K562 (cell line): ENCODE measurements at regions of chr2 and their contacts with region 1.

Region 1: GRCh38 chr2:46296840-46297545 is at the start of gene EPAS1:
- DNase-seq: peak; percentile 93 to 99 (median 98)
- ATAC-seq: peak; percentile 89
- H3K4me3 ChIP-seq: peak within 1 kb of the TSS; percentile 56
- H3K27ac ChIP-seq: peak within 1 kb of the TSS; percentile 66; the same call in 2 of the 3 replicates
- H3K4me1 ChIP-seq: peaks cover 16 to 39% of the 10 kb centered on the region in 2 experiments
- H3K27me3 ChIP-seq: peaks cover 5 to 13% of the 10 kb centered on the region in 2 experiments; a peak in 3 of 5 replicates
- CTCF ChIP-seq: no peak
- EP300 ChIP-seq: no peak
- POLR2A ChIP-seq: peak; percentile 49; the same call in 1 of the 2 replicates
- RAD21 ChIP-seq: no peak
- polyA plus RNA-seq, gene EPAS1: 0.25 to 0.56 TPM

Region 2: DNA sequence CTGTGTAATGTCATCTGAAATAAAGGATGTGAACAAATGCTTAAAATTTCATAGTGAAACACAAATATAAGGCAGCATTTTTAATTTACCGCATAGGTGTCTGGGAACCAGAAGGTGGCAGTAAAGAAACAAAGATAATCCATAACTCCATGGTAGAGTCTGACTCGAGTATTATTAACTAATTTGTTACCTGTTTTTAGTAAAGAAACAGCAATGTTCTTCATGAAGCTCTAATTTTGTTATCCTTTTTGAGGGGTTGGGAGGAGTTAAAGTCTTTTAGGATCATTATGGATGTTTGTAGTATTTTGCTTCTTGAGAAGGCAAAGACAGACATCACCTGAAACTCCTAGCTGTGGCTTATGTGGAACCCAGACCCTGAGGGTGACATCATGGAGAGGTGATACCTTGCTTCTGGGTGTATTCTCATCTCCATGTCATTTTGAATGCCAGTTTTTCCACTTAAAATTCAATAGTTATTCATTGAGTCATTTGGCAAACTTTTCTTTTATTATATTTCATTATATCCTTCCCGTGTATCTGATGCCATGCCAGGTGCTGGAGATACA is 286.0 kb before region 1 on chr2:
- CTCF ChIA-PET with region 1: no interaction called
- POLR2A ChIA-PET with region 1: no interaction called
- in situ Hi-C with region 1: no loop called
- intact Hi-C with region 1: loop called (anchors 10 kb)
- DNase-seq: peak in 2 of 4 experiments; percentile 34 to 49
- ATAC-seq: peak; percentile 77
- H3K4me3 ChIP-seq: no peak overlapping the region
- H3K27ac ChIP-seq: no peak overlapping the region
- H3K4me1 ChIP-seq: no peaks in the 10 kb centered on the region
- H3K27me3 ChIP-seq: peaks cover 14 to 18% of the 10 kb centered on the region in 2 experiments
- CTCF ChIP-seq: peak in 2 of 3 experiments; percentile 23 to 81; a peak in 4 of 6 replicates
- EP300 ChIP-seq: no peak
- POLR2A ChIP-seq: no peak
- RAD21 ChIP-seq: peak; percentile 81 to 88

Region 3: DNA sequence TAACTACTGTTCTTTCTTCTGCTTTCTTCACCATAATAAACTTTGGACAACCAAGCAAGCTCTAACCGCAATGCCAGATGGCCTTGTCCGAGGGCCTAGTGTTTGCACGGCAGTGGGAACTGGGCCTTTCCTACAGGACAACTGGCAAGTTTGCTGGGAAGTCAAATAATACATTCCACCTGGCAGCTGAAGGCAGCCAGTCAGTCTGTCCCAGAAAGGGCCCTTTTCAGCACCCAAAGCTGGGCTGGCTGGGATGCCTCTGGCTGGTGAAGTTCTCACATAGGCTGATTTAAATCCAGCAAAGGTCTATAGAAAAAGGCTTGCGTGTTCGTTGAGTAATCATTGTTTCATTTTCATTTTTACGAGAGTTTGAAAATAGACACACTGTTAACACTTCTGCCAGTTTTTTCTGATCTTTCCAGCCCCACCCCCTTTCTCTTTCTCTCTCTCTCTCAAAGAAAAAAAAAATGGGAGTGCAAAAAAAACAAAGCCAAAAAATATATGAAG is 109.8 kb before region 1 on chr2:
- CTCF ChIA-PET with region 1: no interaction called
- POLR2A ChIA-PET with region 1: no interaction called
- in situ Hi-C with region 1: no loop called
- intact Hi-C with region 1: loop called (anchors 10 kb)
- DNase-seq: no peak
- ATAC-seq: no peak
- H3K4me3 ChIP-seq: no peak overlapping the region
- H3K27ac ChIP-seq: no peak overlapping the region
- H3K4me1 ChIP-seq: no peaks in the 10 kb centered on the region
- H3K27me3 ChIP-seq: peaks cover 0 to 21% of the 10 kb centered on the region in 2 experiments; a peak in 3 of 5 replicates
- CTCF ChIP-seq: no peak
- EP300 ChIP-seq: no peak
- POLR2A ChIP-seq: no peak
- RAD21 ChIP-seq: no peak

Region 4: DNA sequence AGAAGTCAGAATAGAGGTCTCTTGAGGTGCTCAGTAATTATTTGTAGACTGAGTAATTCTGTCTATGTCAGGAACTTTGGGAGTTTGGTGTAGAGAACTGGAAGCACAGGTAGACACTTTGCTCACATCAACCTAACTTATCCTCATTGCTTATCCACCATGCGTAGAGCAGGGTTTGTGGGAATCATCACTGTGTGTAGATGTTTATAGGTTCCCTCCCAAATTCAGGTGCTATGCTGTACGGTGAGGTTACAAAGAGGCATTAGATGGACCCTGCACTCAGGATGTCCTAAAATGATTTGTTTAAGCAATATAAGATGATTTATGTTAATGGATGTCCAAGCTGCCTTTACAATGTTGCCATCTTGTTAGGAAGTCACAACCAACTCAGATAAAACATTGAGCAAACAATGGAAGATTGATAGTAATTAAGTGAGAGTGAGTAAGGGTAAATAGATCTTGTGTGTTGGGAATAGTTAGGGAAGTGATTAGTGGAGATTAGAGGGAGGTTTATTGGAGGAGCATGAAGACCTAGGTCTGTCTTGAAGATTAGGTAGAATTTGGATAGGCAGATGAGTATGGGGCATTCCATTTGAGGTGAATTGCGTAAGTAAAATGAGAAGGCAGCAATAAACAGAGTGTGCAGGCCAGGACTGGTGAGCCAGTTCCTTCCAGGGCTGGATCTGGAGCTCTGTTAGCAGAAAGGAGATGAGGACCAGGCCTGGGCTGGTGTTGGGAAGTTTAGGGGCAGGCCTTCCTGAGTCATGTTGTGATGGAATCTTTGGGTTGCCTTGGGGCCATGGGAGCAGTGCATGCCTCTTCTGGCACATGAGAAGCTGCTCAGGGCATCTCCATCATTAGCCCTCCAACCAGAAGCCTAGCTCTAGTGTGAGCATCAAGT is 12.3 kb after region 1 on chr2:
- CTCF ChIA-PET with region 1: no interaction called
- POLR2A ChIA-PET with region 1: interaction called, 16 read pairs
- in situ Hi-C with region 1: no loop called
- intact Hi-C with region 1: no loop called
- DNase-seq: no peak
- ATAC-seq: no peak; the same call in 2 of the 3 replicates
- H3K4me3 ChIP-seq: no peak overlapping the region
- H3K27ac ChIP-seq: no peak overlapping the region
- H3K4me1 ChIP-seq: peaks cover 8 to 14% of the 10 kb centered on the region in 2 experiments
- H3K27me3 ChIP-seq: no peaks in the 10 kb centered on the region
- CTCF ChIP-seq: no peak
- EP300 ChIP-seq: no peak
- POLR2A ChIP-seq: no peak
- RAD21 ChIP-seq: no peak

Region 5: DNA sequence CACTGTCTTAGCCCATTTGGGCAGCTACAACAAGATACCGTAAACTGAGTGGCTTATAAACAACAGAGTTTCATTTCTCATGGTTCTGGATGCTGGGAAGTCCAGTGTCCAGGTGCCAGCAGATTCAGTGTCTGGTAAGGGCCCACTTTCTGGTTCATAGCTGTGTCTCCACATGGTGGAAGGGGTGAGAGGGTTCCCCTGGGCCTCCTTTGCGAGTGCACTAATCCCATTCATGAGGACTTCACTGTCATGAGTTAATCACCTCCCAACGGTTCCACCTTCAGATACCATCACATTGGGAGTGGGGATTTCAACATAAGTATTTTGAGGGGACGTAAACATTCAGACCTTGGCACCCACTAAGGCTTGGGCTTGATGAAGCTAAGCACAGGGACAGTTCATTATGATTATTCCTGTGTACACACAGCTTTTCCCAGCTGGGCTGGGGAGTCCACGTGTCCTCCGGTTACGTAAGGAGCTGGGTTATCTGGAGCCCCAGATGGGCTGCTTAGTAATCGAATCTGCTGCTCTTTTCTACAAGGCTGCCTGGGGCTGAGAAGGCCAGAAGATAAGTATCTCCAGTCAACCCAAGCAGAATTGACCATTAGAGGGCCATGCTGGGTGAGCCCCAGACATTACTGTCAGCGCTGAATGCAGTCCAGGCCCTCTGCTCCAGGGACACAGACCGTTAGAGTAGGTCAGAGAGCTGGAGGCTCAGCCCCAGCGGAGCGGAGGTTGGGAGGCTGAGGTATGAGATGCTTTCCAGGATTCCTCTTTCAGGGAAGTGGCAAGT is 42.9 kb after region 1 on chr2:
- CTCF ChIA-PET with region 1: no interaction called
- POLR2A ChIA-PET with region 1: interaction called, 6 read pairs
- in situ Hi-C with region 1: no loop called
- intact Hi-C with region 1: loop called (anchors 1 kb)
- DNase-seq: peak; percentile 93 to 96 (median 94)
- ATAC-seq: peak; percentile 98
- H3K4me3 ChIP-seq: no peak overlapping the region
- H3K27ac ChIP-seq: peak overlapping the region; percentile 67
- H3K4me1 ChIP-seq: peaks cover 24 to 52% of the 10 kb centered on the region in 2 experiments
- H3K27me3 ChIP-seq: no peaks in the 10 kb centered on the region
- CTCF ChIP-seq: peak; percentile 43 to 57 (median 49); a peak in 5 of 6 replicates
- EP300 ChIP-seq: peak; percentile 99
- POLR2A ChIP-seq: no peak
- RAD21 ChIP-seq: peak; percentile 60 to 61

Region 6: GRCh38 chr2:46461011-46461674 is 164.2 kb after region 1 on chr2:
- CTCF ChIA-PET with region 1: no interaction called
- POLR2A ChIA-PET with region 1: no interaction called
- in situ Hi-C with region 1: no loop called
- intact Hi-C with region 1: loop called (anchors 1 kb)
- DNase-seq: peak; percentile 76 to 84 (median 82)
- ATAC-seq: peak; percentile 83
- H3K4me3 ChIP-seq: no peak overlapping the region
- H3K27ac ChIP-seq: no peak overlapping the region; the same call in 2 of the 3 replicates
- H3K4me1 ChIP-seq: peaks cover 8 to 10% of the 10 kb centered on the region in 2 experiments; a peak in 4 of 5 replicates
- H3K27me3 ChIP-seq: no peaks in the 10 kb centered on the region
- CTCF ChIP-seq: peak; percentile 94 to 98 (median 97)
- EP300 ChIP-seq: no peak
- POLR2A ChIP-seq: no peak
- RAD21 ChIP-seq: peak; percentile 97 to 98